WTC11 (cell line): ENCODE measurements at regions of chr10 and their contacts with region 1.

Region 1: DNA sequence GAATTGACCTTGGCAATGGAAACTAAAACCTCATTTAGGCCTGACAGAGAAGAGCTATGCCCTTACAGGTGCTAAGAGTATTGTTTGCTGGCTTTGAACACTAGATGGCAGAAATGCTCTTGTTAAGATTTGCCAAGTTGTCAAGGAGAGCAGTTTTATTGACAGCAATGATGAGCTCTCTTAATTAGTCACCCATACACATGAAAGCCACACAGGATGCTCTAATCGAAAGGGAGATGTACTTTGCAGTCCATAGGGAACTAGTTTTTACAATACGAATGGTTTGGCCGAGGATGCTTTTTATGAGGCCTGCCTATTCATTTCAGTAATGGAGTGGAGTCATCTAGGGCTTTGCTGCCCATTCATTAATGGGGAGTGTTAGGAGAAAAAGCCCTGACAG is 45.4 kb upstream of the MBL2 start:
- DNase-seq: no peak
- ATAC-seq: peak; percentile 95
- H3K4me3 Mint-ChIP-seq: no peak overlapping the region
- H3K27ac Mint-ChIP-seq: peak overlapping the region; percentile 70
- H3K4me1 Mint-ChIP-seq: peaks cover 48% of the 10 kb centered on the region
- H3K27me3 Mint-ChIP-seq: no peaks in the 10 kb centered on the region
- CTCF ChIP-seq: peak; percentile 36; the same call in 1 of the 2 replicates

Region 2: GRCh38 chr10:52864201-52865106 is 46.4 kb after region 1 on chr10:
- CTCF ChIA-PET with region 1: interaction called, 11 read pairs
- POLR2A ChIA-PET with region 1: no interaction called
- DNase-seq: peak; percentile 54
- ATAC-seq: peak; percentile 98
- H3K4me3 Mint-ChIP-seq: no peak overlapping the region
- H3K27ac Mint-ChIP-seq: peak overlapping the region; percentile 84; the same call in 1 of the 2 replicates
- H3K4me1 Mint-ChIP-seq: peaks cover 13% of the 10 kb centered on the region
- H3K27me3 Mint-ChIP-seq: peaks cover 8% of the 10 kb centered on the region
- CTCF ChIP-seq: no peak

Region 3: GRCh38 chr10:52883996-52884871 is 66.2 kb after region 1 on chr10:
- CTCF ChIA-PET with region 1: interaction called, 21 read pairs
- POLR2A ChIA-PET with region 1: no interaction called
- DNase-seq: peak; percentile 57
- ATAC-seq: peak; percentile 97
- H3K4me3 Mint-ChIP-seq: peak overlapping the region; percentile 24
- H3K27ac Mint-ChIP-seq: peak overlapping the region; percentile 96
- H3K4me1 Mint-ChIP-seq: peaks cover 43% of the 10 kb centered on the region
- H3K27me3 Mint-ChIP-seq: no peaks in the 10 kb centered on the region
- CTCF ChIP-seq: peak; percentile 76

Region 4: GRCh38 chr10:52900593-52900992 is 82.6 kb after region 1 on chr10:
- CTCF ChIA-PET with region 1: no interaction called
- POLR2A ChIA-PET with region 1: no interaction called
- DNase-seq: no peak
- ATAC-seq: no peak
- H3K4me3 Mint-ChIP-seq: no peak overlapping the region
- H3K27ac Mint-ChIP-seq: 0 out of 2 replicates have a peak overlapping the region, but pooled peaks have one; percentile 48
- H3K4me1 Mint-ChIP-seq: peaks cover 45% of the 10 kb centered on the region
- H3K27me3 Mint-ChIP-seq: no peaks in the 10 kb centered on the region
- CTCF ChIP-seq: no peak

Region 5: DNA sequence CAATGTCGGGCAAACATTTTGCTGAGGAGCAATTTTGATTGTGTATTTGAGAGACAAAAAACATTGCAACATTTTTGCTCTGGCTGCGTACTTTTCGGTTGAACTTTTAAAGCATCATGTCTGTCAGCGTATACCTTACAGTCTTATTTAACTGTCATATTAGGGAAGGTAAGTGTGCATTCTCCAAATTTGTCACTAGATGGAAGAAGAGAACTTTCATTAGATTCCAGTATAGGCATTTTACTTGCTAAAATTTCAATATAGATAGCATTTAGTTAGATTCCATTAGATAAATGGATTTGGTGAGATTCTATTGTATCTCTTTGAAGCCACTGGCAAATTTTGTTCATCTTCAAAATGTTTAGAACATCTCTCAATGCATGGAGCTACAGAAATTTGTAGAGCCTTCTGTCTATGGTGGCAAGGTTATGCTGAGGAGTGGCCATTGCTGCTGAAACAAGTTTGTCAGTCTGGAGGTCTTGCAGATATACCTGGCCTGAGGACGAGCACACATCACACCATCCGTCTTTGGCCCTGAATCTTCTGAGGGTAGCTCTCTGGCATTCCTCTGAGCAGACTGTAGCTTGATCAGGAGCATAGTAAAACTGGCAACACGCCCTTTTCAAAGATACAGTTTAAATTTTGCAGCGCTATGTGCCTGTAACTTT is 392.1 kb after region 1 on chr10:
- CTCF ChIA-PET with region 1: interaction called, 10 read pairs
- POLR2A ChIA-PET with region 1: no interaction called
- DNase-seq: no peak
- ATAC-seq: peak; percentile 98
- H3K4me3 Mint-ChIP-seq: no peak overlapping the region
- H3K27ac Mint-ChIP-seq: peak overlapping the region; percentile 88
- H3K4me1 Mint-ChIP-seq: peaks cover 35% of the 10 kb centered on the region
- H3K27me3 Mint-ChIP-seq: peaks cover 4% of the 10 kb centered on the region; the same call in 1 of the 2 replicates
- CTCF ChIP-seq: peak; percentile 34; the same call in 1 of the 2 replicates